Activated CD4-positive, alpha-beta T cell treated with anti-CD3 and anti-CD28 coated beads for 36 hours (primary cell): ENCODE measurements at regions of chr13 and their contacts with region 1.

Region 1: DNA sequence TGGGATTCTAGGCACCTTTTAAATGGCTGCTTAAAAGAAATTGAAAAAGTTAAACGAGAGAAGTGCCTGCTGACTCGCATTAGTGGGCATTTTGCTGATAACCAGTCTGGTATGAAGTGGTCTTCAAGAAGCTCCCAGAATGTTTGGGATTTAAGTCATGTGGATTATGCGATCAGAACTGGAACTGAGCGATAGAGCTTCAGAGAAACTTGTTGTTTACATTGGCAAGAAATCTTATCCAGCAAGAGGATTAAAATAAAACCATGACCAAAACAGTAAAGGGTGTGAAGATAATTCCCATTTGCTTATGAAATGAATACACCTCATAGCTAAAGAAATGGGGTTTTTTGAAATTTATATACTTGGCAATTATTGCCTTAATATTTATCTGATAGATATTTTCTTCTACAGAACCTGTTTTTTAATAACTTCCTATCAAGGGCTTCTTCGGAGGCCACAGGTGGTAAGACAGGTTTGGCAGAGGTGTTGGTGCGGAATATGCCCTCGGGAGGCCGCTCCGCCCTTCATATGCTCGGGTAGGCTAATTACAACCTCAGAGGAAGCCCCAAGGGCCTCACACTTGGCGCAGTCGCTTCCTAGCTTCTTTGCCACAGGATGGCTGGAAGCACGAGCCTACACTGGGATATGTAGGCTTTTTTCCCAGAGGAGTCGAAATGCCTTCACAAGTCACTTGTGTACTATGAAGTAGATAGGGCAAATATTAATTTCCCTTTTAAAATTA is 68.6 kb downstream of the LMO7 start:
- DNase-seq: no peak
- ATAC-seq: no peak
- H3K4me3 Mint-ChIP-seq: no peak overlapping the region
- H3K27ac Mint-ChIP-seq: no peak overlapping the region
- H3K4me1 Mint-ChIP-seq: peaks cover 16% of the 10 kb centered on the region
- H3K27me3 Mint-ChIP-seq: no peaks in the 10 kb centered on the region

Region 2: GRCh38 chr13:75739244-75739868 is 34.6 kb after region 1 on chr13:
- CTCF ChIA-PET with region 1: no interaction called
- POLR2A ChIA-PET with region 1: no interaction called
- intact Hi-C with region 1: no loop called
- DNase-seq: no peak
- ATAC-seq: peak; percentile 55
- H3K4me3 Mint-ChIP-seq: no peak overlapping the region
- H3K27ac Mint-ChIP-seq: no peak overlapping the region
- H3K4me1 Mint-ChIP-seq: peaks cover 16% of the 10 kb centered on the region
- H3K27me3 Mint-ChIP-seq: no peaks in the 10 kb centered on the region

Region 3: DNA sequence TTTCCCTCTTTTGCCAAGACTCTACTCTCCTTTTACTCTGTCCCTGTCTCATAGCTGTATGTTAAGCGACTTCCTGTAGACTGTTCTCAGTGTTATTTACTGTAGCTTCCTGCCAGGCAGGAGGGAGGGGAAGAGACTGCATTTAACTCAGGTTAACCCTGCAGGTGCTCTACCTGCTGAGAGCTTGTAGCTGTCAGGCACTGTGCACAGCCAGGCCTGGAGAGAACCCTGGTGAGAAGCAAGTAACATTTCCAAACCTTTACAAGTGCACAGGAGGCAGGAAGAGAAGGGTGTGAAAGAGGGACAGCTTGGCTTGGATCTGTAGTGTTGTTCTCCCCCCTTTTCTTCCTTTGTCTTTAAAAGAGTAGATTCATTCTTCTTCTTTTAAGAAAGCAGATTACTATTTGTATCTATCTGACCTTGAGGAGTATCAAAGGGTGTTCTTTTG is 98.4 kb after region 1 on chr13:
- CTCF ChIA-PET with region 1: no interaction called
- POLR2A ChIA-PET with region 1: no interaction called
- intact Hi-C with region 1: loop called in 1 of 2 experiments (anchors 2 kb)
- DNase-seq: peak; percentile 24
- ATAC-seq: peak; percentile 43
- H3K4me3 Mint-ChIP-seq: no peak overlapping the region
- H3K27ac Mint-ChIP-seq: peak overlapping the region; percentile 55
- H3K4me1 Mint-ChIP-seq: peaks cover 55% of the 10 kb centered on the region
- H3K27me3 Mint-ChIP-seq: no peaks in the 10 kb centered on the region